ENCODE measurements at regions of chr3 and their contacts with region 1.

Region 1: GRCh38 chr3:124761250-124761796 is 31.1 kb downstream of the UMPS start:
- DNase-seq: peak; percentile 83
- H3K4me3 Mint-ChIP-seq: peak overlapping the region; percentile 28
- H3K27ac Mint-ChIP-seq: no peak overlapping the region
- H3K4me1 Mint-ChIP-seq: peaks cover 3% of the 10 kb centered on the region
- H3K27me3 Mint-ChIP-seq: no peaks in the 10 kb centered on the region

Region 2: GRCh38 chr3:124730129-124730940 is 31.0 kb before region 1 on chr3 and contains the start of gene UMPS:
- CTCF ChIA-PET with region 1: interaction called, 10 read pairs
- POLR2A ChIA-PET with region 1: no interaction called
- intact Hi-C with region 1: no loop called
- DNase-seq: peak; percentile 96
- H3K4me3 Mint-ChIP-seq: peak within 1 kb of the TSS; percentile 97
- H3K27ac Mint-ChIP-seq: peak within 1 kb of the TSS; percentile 94
- H3K4me1 Mint-ChIP-seq: peaks cover 35% of the 10 kb centered on the region
- H3K27me3 Mint-ChIP-seq: peaks cover 9% of the 10 kb centered on the region
- total RNA-seq, gene UMPS: 40.9 to 48.1 TPM

Region 3: GRCh38 chr3:124747111-124747981 is 14.0 kb before region 1 on chr3:
- CTCF ChIA-PET with region 1: interaction called, 23 read pairs
- POLR2A ChIA-PET with region 1: no interaction called
- intact Hi-C with region 1: no loop called
- DNase-seq: no peak
- H3K4me3 Mint-ChIP-seq: no peak overlapping the region
- H3K27ac Mint-ChIP-seq: no peak overlapping the region
- H3K4me1 Mint-ChIP-seq: no peaks in the 10 kb centered on the region
- H3K27me3 Mint-ChIP-seq: no peaks in the 10 kb centered on the region

Region 4: DNA sequence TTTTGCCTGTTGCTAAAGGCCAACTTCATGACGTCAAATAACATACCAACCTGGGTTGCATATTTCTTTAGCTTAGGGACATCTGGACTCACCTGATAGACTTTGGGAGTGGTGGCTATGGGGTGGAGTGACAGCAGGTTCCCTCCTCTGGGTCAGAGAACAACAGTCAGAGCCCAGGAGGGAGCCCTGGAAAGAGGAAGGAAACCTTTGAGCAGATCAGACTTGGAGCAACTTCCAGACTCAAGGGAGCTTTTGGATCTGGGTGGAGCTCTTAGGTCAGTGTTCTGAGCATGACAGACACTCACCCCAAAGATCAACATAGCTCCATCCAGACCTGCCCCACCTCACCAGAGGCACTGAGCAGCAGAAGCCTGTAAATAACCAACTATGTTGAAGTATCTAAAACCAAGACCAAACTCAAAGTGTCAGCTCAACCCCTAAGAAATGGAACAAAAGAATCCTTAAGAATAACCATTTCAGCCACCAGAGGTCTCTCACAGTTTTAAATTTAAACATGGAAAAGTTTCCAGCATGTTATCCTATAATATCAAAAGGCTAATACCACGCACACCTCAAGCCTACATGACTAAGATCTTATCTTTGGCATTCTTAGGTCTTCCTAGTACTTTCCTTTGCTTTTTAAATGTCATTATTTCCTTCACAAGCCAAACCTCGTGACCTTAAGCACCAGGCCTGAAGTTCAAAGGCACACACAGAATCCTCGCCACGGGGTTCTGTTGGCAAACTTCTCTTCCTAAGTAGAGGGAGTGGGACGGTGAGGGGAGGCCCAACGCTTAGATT is 25.3 kb after region 1 on chr3:
- CTCF ChIA-PET with region 1: interaction called, 31 read pairs
- POLR2A ChIA-PET with region 1: interaction called, 3 read pairs
- intact Hi-C with region 1: no loop called
- DNase-seq: no peak
- H3K4me3 Mint-ChIP-seq: no peak overlapping the region
- H3K27ac Mint-ChIP-seq: no peak overlapping the region
- H3K4me1 Mint-ChIP-seq: peaks cover 2% of the 10 kb centered on the region
- H3K27me3 Mint-ChIP-seq: no peaks in the 10 kb centered on the region

Region 5: GRCh38 chr3:124905849-124906248 is 144.5 kb after region 1 on chr3:
- CTCF ChIA-PET with region 1: interaction called, 285 read pairs
- POLR2A ChIA-PET with region 1: no interaction called
- intact Hi-C with region 1: loop called (anchors 1 kb)
- DNase-seq: no peak
- H3K4me3 Mint-ChIP-seq: no peak overlapping the region
- H3K27ac Mint-ChIP-seq: no peak overlapping the region
- H3K4me1 Mint-ChIP-seq: no peaks in the 10 kb centered on the region
- H3K27me3 Mint-ChIP-seq: peaks cover 11% of the 10 kb centered on the region

Region 6: DNA sequence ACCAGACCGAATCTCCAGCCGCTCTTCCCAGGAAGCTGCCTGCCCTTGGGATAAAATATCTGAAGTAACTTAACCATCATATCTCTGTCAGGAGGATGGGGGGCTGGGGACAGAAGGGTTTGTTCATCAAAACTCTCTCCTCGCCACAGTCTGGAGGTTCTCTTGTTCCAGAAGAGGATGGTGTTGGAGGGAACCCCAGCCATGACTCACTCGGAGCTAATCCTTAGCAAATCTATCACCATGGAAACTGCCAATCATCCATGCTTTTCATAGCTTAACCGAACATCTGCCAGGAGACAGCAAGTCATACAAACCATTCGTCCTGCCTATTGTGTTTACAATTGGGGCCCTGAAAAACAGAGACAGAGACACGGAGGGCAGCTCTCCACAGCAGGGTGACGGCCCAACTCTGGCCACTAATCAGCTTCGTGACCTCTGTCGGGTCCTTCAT is 368.2 kb after region 1 on chr3:
- CTCF ChIA-PET with region 1: no interaction called
- POLR2A ChIA-PET with region 1: no interaction called
- intact Hi-C with region 1: no loop called
- DNase-seq: no peak
- H3K4me3 Mint-ChIP-seq: no peak overlapping the region
- H3K27ac Mint-ChIP-seq: no peak overlapping the region
- H3K4me1 Mint-ChIP-seq: peaks cover 9% of the 10 kb centered on the region
- H3K27me3 Mint-ChIP-seq: peaks cover 5% of the 10 kb centered on the region

Region 7: GRCh38 chr3:125585595-125586223 is 824.4 kb after region 1 on chr3:
- CTCF ChIA-PET with region 1: interaction called, 13 read pairs
- POLR2A ChIA-PET with region 1: no interaction called
- intact Hi-C with region 1: no loop called
- DNase-seq: peak; percentile 57
- H3K4me3 Mint-ChIP-seq: no peak overlapping the region
- H3K27ac Mint-ChIP-seq: no peak overlapping the region
- H3K4me1 Mint-ChIP-seq: peaks cover 23% of the 10 kb centered on the region
- H3K27me3 Mint-ChIP-seq: no peaks in the 10 kb centered on the region